HCT116 (cell line): ENCODE measurements at regions of chr2 and their contacts with region 1.

Region 1: DNA sequence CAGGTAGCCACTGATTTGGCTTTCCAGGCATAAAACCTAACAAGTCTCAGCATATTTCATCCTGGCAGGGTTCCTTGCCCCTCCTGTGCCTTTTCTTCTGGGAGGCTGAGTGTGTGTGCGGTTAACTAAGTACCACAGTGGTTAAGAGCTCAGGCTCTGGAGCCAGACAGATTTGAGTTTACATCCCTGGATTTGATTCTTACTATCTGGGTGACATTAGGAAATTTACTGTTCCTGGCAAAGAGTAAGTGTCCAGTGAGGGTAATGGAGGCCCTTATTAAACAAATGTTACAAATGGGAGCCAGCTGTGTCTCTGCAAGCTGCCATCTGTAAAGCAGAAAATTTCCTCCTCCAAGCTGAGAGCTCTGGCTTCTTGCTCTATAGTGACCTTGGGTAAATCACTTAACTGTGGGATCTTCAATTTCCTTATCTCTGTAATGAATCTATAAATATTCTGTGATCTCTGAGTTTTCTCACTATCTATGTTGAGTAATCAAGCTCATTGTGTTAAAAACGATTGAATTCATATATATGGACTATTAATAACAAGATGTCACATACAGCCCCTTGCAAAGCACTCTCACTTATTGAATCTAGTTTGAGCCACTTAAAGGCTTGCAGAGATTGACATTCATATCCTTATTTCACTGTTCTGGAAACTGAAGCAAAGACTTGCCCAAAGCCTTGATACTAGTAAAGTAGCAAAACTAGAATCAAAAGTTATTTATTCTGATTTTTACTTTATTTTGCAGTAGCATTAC is 6.5 kb upstream of the COBLL1 start:
- DNase-seq: no peak
- ATAC-seq: no peak
- H3K4me3 ChIP-seq: no peak overlapping the region
- H3K27ac ChIP-seq: no peak overlapping the region
- H3K4me1 ChIP-seq: no peaks in the 10 kb centered on the region
- H3K27me3 ChIP-seq: no peaks in the 10 kb centered on the region
- CTCF ChIP-seq: no peak
- POLR2A ChIP-seq: no peak
- RAD21 ChIP-seq: no peak

Region 2: DNA sequence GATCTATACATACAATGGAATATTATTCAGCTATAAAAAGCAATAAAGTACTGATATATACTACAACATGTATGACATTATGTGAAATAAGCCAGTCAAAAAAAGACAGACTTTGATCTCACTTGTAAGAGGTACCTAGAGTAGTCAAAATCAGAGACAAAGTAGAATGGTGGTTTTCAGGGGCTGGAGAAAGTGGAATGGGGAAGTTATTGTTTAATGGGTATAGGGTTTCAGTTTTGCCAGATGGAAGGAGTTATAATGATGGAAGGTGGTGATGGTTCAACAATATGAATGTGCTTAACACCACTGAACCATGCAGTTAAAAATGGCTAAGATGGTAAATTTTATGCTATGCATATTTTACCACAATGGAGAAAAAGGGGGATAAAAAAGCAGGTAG is 12.9 kb before region 1 on chr2:
- CTCF ChIA-PET with region 1: no interaction called
- POLR2A ChIA-PET with region 1: no interaction called
- RAD21 ChIA-PET with region 1: no interaction called
- intact Hi-C with region 1: loop called (anchors 1 kb)
- DNase-seq: no peak
- ATAC-seq: no peak
- H3K4me3 ChIP-seq: no peak overlapping the region
- H3K27ac ChIP-seq: no peak overlapping the region
- H3K4me1 ChIP-seq: peaks cover 4 to 5% of the 10 kb centered on the region in 2 experiments; a peak in 2 of 4 replicates
- H3K27me3 ChIP-seq: no peaks in the 10 kb centered on the region
- CTCF ChIP-seq: no peak
- POLR2A ChIP-seq: no peak
- RAD21 ChIP-seq: no peak